ENCODE measurements at regions of chr10 and their contacts with region 1.

Region 1: GRCh38 chr10:122374237-122374869 is at the start of gene PLEKHA1:
- DNase-seq: peak; percentile 84
- ATAC-seq: peak; percentile 95
- H3K4me3 ChIP-seq: peak within 1 kb of the TSS; percentile 86 to 89 (median 87)
- H3K27ac ChIP-seq: peak within 1 kb of the TSS; percentile 82
- H3K4me1 ChIP-seq: peaks cover 61% of the 10 kb centered on the region
- H3K27me3 ChIP-seq: peaks cover 0 to 6% of the 10 kb centered on the region in 2 experiments; a peak in 1 of 5 replicates
- CTCF ChIP-seq: 0 out of 2 replicates have a peak, but pooled peaks have one; percentile 4
- EP300 ChIP-seq: no peak
- POLR2A ChIP-seq: peak in 1 of 2 experiments; percentile 70; a peak in 2 of 4 replicates
- RAD21 ChIP-seq: no peak
- total RNA-seq, gene PLEKHA1: 30.8 and 32.2 TPM in 2 replicates

Region 2: DNA sequence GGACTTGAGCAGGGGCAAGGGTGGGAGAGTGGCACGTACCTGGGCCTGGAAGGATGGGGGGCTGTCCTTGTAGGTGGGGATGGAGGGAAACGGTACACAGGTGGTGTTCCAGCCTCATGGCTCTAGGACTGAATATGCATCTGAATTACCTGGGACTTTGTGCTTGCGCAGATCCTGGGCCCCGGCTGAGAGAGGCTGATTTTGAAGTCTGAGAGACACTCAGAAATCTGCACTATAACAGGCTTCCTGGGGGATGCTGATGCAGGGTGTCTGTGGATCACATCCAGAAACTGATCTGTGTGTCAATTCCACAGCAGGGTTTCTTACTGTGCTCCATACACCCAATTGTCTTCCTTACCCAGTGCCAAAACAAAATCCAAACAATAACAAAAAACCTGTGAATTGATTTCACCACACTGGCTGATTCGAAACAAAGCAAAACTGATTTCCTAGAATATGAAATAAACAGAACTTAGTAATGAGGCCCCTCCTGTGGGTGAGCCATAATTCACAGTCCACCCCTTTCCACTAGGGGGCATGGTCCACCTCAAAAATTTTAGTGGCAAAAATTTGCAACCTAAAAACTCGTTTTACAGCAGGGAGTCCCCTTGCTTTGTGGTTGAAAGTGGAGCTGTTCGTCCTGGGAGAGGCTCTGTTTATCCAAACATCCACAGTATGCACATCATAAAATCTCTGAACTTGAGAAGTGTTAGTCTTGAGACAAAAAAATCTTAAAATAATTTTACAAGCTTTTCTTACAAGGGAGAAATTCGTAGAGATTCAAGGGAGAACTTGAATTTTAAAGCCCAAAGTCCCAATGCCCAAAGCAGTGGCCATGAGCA is 31.8 kb before region 1 on chr10:
- CTCF ChIA-PET with region 1: no interaction called
- POLR2A ChIA-PET with region 1: interaction called, 43 read pairs
- in situ Hi-C with region 1: no loop called
- intact Hi-C with region 1: loop called (anchors 2 kb)
- DNase-seq: peak; percentile 54
- ATAC-seq: peak; percentile 64
- H3K4me3 ChIP-seq: no peak overlapping the region
- H3K27ac ChIP-seq: no peak overlapping the region
- H3K4me1 ChIP-seq: peaks cover 44% of the 10 kb centered on the region
- H3K27me3 ChIP-seq: no peaks in the 10 kb centered on the region
- CTCF ChIP-seq: peak; percentile 71
- EP300 ChIP-seq: no peak
- POLR2A ChIP-seq: no peak
- RAD21 ChIP-seq: peak; percentile 81

Region 3: DNA sequence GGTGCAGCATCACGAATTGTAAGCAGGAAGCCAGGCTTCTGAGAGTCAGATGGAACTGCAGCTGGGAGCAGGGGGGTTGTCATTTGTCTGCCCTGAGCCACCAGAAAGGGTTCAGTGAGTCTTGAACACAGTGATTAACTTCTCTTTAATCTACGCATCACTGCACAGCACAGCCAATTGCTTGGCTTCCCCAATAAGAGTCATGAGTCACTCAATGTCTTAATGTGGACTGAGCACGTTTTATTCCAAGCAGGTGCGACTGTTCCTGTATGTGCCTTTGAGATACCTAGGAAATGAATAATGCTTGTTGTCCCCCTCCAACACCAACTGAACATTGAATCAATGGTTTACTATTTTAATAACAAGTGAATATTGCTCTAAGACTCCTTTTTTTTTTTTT is 25.8 kb before region 1 on chr10:
- CTCF ChIA-PET with region 1: no interaction called
- POLR2A ChIA-PET with region 1: interaction called, 43 read pairs
- in situ Hi-C with region 1: no loop called
- intact Hi-C with region 1: loop called (anchors 1 kb)
- DNase-seq: no peak
- ATAC-seq: no peak
- H3K4me3 ChIP-seq: no peak overlapping the region
- H3K27ac ChIP-seq: peak overlapping the region; percentile 60
- H3K4me1 ChIP-seq: peaks cover 78% of the 10 kb centered on the region
- H3K27me3 ChIP-seq: no peaks in the 10 kb centered on the region
- CTCF ChIP-seq: no peak
- EP300 ChIP-seq: no peak
- POLR2A ChIP-seq: no peak
- RAD21 ChIP-seq: no peak

Region 4: GRCh38 chr10:122391875-122392274 is 17.5 kb after region 1 on chr10:
- CTCF ChIA-PET with region 1: no interaction called
- POLR2A ChIA-PET with region 1: interaction called, 10 read pairs
- in situ Hi-C with region 1: no loop called
- intact Hi-C with region 1: no loop called
- DNase-seq: no peak
- ATAC-seq: no peak
- H3K4me3 ChIP-seq: no peak overlapping the region
- H3K27ac ChIP-seq: no peak overlapping the region
- H3K4me1 ChIP-seq: peaks cover 33% of the 10 kb centered on the region
- H3K27me3 ChIP-seq: no peaks in the 10 kb centered on the region
- CTCF ChIP-seq: no peak
- EP300 ChIP-seq: no peak
- POLR2A ChIP-seq: no peak
- RAD21 ChIP-seq: no peak

Region 5: DNA sequence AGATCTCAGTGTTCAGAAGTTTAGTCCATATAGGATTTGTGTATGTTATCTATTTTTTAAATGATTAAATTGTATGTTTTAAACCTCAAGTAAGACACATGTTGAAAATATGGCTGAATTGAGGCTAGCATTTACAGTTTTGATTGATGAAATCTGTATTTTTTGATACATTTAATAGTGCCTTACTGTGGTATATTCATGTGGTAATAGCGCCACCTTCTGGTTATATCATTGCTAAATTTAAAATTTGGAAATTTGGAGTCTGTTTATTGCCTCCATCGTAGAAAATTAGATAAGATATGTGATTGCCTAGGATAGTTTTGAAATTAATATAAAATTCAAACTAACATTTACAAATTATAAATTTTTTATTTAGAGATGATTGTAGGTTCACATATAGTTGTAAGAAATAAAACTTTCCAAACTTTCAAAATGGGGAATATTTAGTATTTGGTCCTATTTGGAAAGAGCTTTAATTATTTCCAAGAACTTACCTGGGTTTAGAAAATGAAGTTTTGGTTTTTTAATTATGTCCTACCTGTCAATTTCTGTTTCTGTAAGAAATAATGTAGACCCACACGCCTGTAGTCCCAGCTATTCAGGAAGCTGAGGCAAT is 61.0 kb after region 1 on chr10:
- CTCF ChIA-PET with region 1: no interaction called
- POLR2A ChIA-PET with region 1: no interaction called
- in situ Hi-C with region 1: no loop called
- intact Hi-C with region 1: no loop called
- DNase-seq: peak; percentile 30
- ATAC-seq: no peak
- H3K4me3 ChIP-seq: no peak overlapping the region
- H3K27ac ChIP-seq: no peak overlapping the region
- H3K4me1 ChIP-seq: no peaks in the 10 kb centered on the region
- H3K27me3 ChIP-seq: no peaks in the 10 kb centered on the region
- CTCF ChIP-seq: peak; percentile 62
- EP300 ChIP-seq: no peak
- POLR2A ChIP-seq: no peak
- RAD21 ChIP-seq: 0 out of 2 replicates have a peak, but pooled peaks have one; percentile 56

Measured in HepG2 (cell line).